ENCODE measurements at regions of chr3 and their contacts with region 1.

Region 1: DNA sequence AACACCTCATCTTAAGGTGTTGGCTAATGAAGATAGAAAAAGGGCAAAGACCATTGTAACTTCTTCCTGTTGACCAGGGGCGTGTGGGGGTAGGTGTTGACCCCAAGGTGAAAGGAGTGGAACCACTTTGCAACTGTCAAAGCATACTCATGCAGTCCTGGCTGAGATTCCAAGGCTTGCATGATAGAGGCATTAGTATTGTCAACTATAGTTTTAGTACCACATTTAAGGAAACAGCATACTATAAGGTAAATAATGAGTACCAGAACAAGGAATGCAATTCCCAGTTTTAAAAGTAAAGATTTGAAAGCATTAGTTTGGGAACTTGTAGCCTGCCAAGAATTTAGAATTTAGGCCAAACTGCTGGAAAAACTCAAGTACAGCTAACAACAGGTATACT is 27.8 kb upstream of the ADGRG7 start:
- DNase-seq: no peak
- H3K4me3 ChIP-seq: no peak overlapping the region
- H3K27ac ChIP-seq: no peak overlapping the region
- H3K4me1 ChIP-seq: no peaks in the 10 kb centered on the region
- H3K27me3 ChIP-seq: no peaks in the 10 kb centered on the region
- CTCF ChIP-seq: no peak

Region 2: GRCh38 chr3:99833617-99834205 is 747.9 kb before region 1 on chr3:
- intact Hi-C with region 1: loop called (anchors 10 kb)
- DNase-seq: no peak
- H3K4me3 ChIP-seq: no peak overlapping the region
- H3K27ac ChIP-seq: peak overlapping the region; percentile 40
- H3K4me1 ChIP-seq: peaks cover 38% of the 10 kb centered on the region
- H3K27me3 ChIP-seq: no peaks in the 10 kb centered on the region
- CTCF ChIP-seq: no peak